Right lobe of liver (tissue), 6 donors: ENCODE measurements at regions of chr2 and their contacts with region 1.

Region 1: GRCh38 chr2:200578778-200579177 is 7.0 kb upstream of the AOX1 start:
- DNase-seq: peak in 1 of 3 donors; percentile 42
- ATAC-seq: peak; percentile 95 to 99 (median 97)
- H3K4me3 ChIP-seq: no peak overlapping the region
- H3K27ac ChIP-seq: peak overlapping the region in 1 of 3 donors; percentile 10
- H3K4me1 ChIP-seq: peaks cover 0 to 18% (median 4%) of the 10 kb centered on the region in 4 donors
- H3K27me3 ChIP-seq: no peaks in the 10 kb centered on the region
- CTCF ChIP-seq: peak; percentile 56 to 79 (median 76)
- POLR2A ChIP-seq: no peak

Region 2: DNA sequence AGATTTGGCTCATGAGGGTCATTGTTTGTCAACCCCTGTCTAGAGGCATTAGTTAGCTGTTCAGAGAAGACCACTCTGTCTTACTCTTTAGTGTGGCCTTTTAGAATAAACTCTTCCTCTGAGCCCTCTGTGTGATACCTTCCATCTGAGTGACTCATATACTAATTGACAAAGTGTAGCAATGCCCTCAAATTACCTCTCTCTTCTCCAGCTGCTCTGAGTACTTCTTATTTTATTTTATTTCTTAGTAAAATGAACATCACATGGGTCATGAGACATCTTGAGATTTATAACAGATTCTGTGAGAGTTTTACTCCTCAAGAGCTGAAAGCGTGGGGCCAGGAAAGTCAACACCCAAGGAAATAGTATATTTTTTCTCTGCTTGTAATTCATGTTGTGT is 136.3 kb before region 1 on chr2:
- intact Hi-C with region 1: no loop called
- DNase-seq: no peak
- ATAC-seq: no peak
- H3K4me3 ChIP-seq: no peak overlapping the region
- H3K27ac ChIP-seq: no peak overlapping the region
- H3K4me1 ChIP-seq: no peaks in the 10 kb centered on the region
- H3K27me3 ChIP-seq: no peaks in the 10 kb centered on the region
- CTCF ChIP-seq: no peak
- POLR2A ChIP-seq: no peak

Region 3: GRCh38 chr2:200695191-200695590 is 116.4 kb after region 1 on chr2:
- intact Hi-C with region 1: loop called in 1 of 2 experiments (anchors 10 kb)
- DNase-seq: no peak
- ATAC-seq: peak in 2 of 4 donors; percentile 11 to 26
- H3K4me3 ChIP-seq: no peak overlapping the region
- H3K27ac ChIP-seq: no peak overlapping the region
- H3K4me1 ChIP-seq: peaks cover 0 to 15% (median 0%) of the 10 kb centered on the region in 4 donors
- H3K27me3 ChIP-seq: no peaks in the 10 kb centered on the region
- CTCF ChIP-seq: no peak
- POLR2A ChIP-seq: no peak

Region 4: GRCh38 chr2:200950378-200950777 is 371.6 kb after region 1 on chr2:
- intact Hi-C with region 1: no loop called
- DNase-seq: no peak
- ATAC-seq: no peak
- H3K4me3 ChIP-seq: no peak overlapping the region
- H3K27ac ChIP-seq: no peak overlapping the region
- H3K4me1 ChIP-seq: no peaks in the 10 kb centered on the region
- H3K27me3 ChIP-seq: no peaks in the 10 kb centered on the region
- CTCF ChIP-seq: no peak
- POLR2A ChIP-seq: no peak